Mammary epithelial cell (primary cell): ENCODE measurements at regions of chr5 and their contacts with region 1.

Region 1: DNA sequence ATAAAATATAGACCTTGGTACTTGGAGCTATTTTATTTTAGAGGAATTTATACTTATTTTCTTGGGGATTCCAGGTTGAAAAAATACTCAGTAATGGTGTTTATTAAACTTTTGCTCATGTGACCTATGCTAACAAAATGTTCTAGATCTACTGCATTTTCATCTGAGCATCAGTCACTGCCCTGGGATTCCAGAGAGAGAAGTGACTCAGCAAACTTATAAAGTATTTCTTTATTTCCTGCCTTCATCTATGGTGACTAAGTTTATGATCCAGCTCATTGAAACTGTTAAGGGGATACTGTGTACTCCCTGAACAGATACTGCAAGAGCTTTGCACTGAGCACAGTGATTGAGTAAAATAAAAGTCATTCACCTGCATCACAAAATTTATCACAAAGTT is 298.5 kb upstream of the CDH18 start:
- DNase-seq: peak; percentile 94
- H3K4me3 ChIP-seq: no peak overlapping the region
- H3K27ac ChIP-seq: peak overlapping the region; percentile 71
- H3K4me1 ChIP-seq: peaks cover 4% of the 10 kb centered on the region
- H3K27me3 ChIP-seq: no peaks in the 10 kb centered on the region
- CTCF ChIP-seq: no peak

Region 2: GRCh38 chr5:20340127-20340526 is 53.6 kb after region 1 on chr5:
- CTCF ChIA-PET with region 1: no interaction called
- dilution Hi-C with region 1: no loop called
- in situ Hi-C with region 1: no loop called
- intact Hi-C with region 1: no loop called
- DNase-seq: no peak
- H3K4me3 ChIP-seq: no peak overlapping the region
- H3K27ac ChIP-seq: no peak overlapping the region
- H3K4me1 ChIP-seq: no peaks in the 10 kb centered on the region
- H3K27me3 ChIP-seq: no peaks in the 10 kb centered on the region
- CTCF ChIP-seq: no peak

Region 3: DNA sequence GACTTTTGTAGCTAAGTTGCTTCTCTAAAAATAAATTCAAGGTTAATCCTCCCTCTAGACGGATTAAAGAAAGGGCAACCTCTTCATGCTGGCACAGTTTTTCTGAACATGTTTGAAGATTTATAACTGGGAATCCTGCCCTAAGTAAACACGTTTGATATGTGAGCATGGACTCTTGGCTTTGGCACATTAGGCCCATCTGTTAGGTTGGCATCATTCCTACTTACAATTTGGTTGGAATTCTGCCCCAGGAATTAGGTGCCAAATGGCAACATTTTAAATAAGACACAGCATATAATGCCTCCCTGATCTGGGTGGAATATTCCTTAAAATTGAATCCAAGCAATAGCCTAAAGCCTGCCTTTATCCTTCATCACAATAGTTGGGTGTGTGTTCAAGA is 73.8 kb after region 1 on chr5:
- CTCF ChIA-PET with region 1: no interaction called
- dilution Hi-C with region 1: no loop called
- in situ Hi-C with region 1: no loop called
- intact Hi-C with region 1: no loop called
- DNase-seq: no peak
- H3K4me3 ChIP-seq: no peak overlapping the region
- H3K27ac ChIP-seq: no peak overlapping the region
- H3K4me1 ChIP-seq: no peaks in the 10 kb centered on the region
- H3K27me3 ChIP-seq: no peaks in the 10 kb centered on the region
- CTCF ChIP-seq: no peak

Region 4: GRCh38 chr5:20555025-20555424 is 268.5 kb after region 1 on chr5:
- CTCF ChIA-PET with region 1: interaction called, 16 read pairs
- dilution Hi-C with region 1: no loop called
- in situ Hi-C with region 1: no loop called
- intact Hi-C with region 1: no loop called
- DNase-seq: no peak
- H3K4me3 ChIP-seq: no peak overlapping the region
- H3K27ac ChIP-seq: no peak overlapping the region
- H3K4me1 ChIP-seq: no peaks in the 10 kb centered on the region
- H3K27me3 ChIP-seq: no peaks in the 10 kb centered on the region
- CTCF ChIP-seq: no peak